Caco-2 (cell line): ENCODE measurements at regions of chr11 and their contacts with region 1.

Region 1: DNA sequence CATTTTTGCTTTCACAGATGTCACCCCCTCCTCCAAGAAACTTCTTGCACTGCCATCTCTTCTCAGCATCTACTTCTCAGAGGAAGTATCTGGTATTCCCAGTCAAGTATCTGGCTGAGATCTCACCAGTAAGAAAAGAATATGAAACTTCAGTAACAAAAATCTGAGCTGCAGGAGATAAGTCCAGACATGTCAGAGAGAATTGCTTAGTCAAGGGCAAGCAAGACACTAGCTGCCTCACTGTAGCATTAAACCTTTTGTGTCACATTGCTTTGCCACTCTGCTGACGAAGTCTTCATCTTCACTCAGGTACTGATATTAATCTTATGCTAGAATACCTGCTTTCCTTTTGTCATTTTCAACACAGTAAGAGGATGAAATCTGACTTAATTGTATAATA is 70.6 kb upstream of the ZC3H12C start:
- DNase-seq: no peak
- H3K4me3 ChIP-seq: no peak overlapping the region
- H3K4me3 Mint-ChIP-seq: no peak overlapping the region
- H3K27ac Mint-ChIP-seq: no peak overlapping the region
- H3K4me1 ChIP-seq: peaks cover 14% of the 10 kb centered on the region
- H3K4me1 Mint-ChIP-seq: no peaks in the 10 kb centered on the region
- H3K27me3 ChIP-seq: no peaks in the 10 kb centered on the region
- H3K27me3 Mint-ChIP-seq: peaks cover 16% of the 10 kb centered on the region
- CTCF ChIP-seq: no peak

Region 2: DNA sequence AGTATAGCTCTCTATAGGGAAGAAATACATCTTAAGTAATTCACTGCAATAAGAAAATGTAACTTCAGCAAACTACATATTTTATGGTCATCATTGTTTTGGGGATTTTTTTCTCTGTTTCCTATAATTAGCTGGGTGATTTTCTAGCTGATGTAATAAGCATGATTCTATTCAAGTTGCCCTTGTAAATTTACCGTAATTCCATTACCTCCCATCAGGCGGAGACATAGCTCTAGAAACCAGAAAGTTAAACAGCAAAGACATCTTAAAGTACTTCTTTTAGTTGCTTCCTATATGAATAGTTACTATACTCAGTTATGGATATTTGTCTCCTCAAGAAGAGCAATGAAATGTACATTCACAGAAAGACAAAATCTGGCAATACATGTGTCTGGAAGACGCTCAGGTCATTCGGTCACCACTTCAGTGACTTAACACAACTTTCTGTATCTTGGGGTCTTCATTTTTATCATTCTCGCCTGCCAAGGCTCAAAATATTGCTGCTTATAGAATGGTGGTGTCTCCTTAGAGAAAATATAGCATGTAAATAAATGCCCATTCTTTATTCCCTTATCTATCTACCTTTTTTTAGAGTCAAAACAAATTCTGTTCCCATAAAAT is 169.3 kb before region 1 on chr11:
- CTCF ChIA-PET with region 1: no interaction called
- POLR2A ChIA-PET with region 1: no interaction called
- intact Hi-C with region 1: no loop called
- DNase-seq: peak in 1 of 2 experiments; percentile 66
- H3K4me3 ChIP-seq: no peak overlapping the region
- H3K4me3 Mint-ChIP-seq: no peak overlapping the region
- H3K27ac Mint-ChIP-seq: no peak overlapping the region
- H3K4me1 ChIP-seq: no peaks in the 10 kb centered on the region
- H3K4me1 Mint-ChIP-seq: no peaks in the 10 kb centered on the region
- H3K27me3 ChIP-seq: peaks cover 1% of the 10 kb centered on the region; the same call in 1 of the 2 replicates
- H3K27me3 Mint-ChIP-seq: peaks cover 5% of the 10 kb centered on the region
- CTCF ChIP-seq: peak; percentile 86 to 87

Region 3: GRCh38 chr11:109972939-109973338 is 49.6 kb before region 1 on chr11:
- CTCF ChIA-PET with region 1: no interaction called
- POLR2A ChIA-PET with region 1: no interaction called
- intact Hi-C with region 1: no loop called
- DNase-seq: no peak
- H3K4me3 ChIP-seq: no peak overlapping the region
- H3K4me3 Mint-ChIP-seq: no peak overlapping the region
- H3K27ac Mint-ChIP-seq: no peak overlapping the region
- H3K4me1 ChIP-seq: no peaks in the 10 kb centered on the region
- H3K4me1 Mint-ChIP-seq: no peaks in the 10 kb centered on the region
- H3K27me3 ChIP-seq: no peaks in the 10 kb centered on the region
- H3K27me3 Mint-ChIP-seq: peaks cover 3% of the 10 kb centered on the region
- CTCF ChIP-seq: no peak

Region 4: GRCh38 chr11:109984634-109985289 is 37.8 kb before region 1 on chr11:
- CTCF ChIA-PET with region 1: no interaction called
- POLR2A ChIA-PET with region 1: no interaction called
- intact Hi-C with region 1: no loop called
- DNase-seq: no peak
- H3K4me3 ChIP-seq: no peak overlapping the region
- H3K4me3 Mint-ChIP-seq: no peak overlapping the region
- H3K27ac Mint-ChIP-seq: no peak overlapping the region
- H3K4me1 ChIP-seq: peaks cover 34% of the 10 kb centered on the region
- H3K4me1 Mint-ChIP-seq: peaks cover 20% of the 10 kb centered on the region
- H3K27me3 ChIP-seq: no peaks in the 10 kb centered on the region
- H3K27me3 Mint-ChIP-seq: no peaks in the 10 kb centered on the region
- CTCF ChIP-seq: no peak

Region 5: DNA sequence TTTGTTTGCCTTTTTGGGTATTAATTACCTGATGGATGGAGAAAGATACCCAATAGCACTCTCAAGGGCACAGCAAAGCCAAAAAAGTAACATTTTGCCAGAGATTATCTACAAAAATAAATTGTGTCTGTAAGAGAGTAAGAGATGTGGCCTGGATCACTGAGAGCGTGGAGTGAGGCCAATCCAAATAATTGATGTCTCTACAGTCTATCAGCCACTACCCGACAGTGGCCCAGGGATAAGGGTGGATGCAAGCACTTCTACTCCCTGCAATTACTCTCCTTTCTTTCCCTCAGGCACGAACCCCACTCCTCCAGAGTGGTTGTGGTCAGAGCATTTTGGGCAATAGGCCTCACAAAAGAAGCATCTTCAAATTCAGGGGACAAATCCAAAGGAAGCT is 21.7 kb before region 1 on chr11:
- CTCF ChIA-PET with region 1: no interaction called
- POLR2A ChIA-PET with region 1: interaction called, 10 read pairs
- intact Hi-C with region 1: no loop called
- DNase-seq: no peak
- H3K4me3 ChIP-seq: no peak overlapping the region
- H3K4me3 Mint-ChIP-seq: no peak overlapping the region
- H3K27ac Mint-ChIP-seq: no peak overlapping the region
- H3K4me1 ChIP-seq: peaks cover 13% of the 10 kb centered on the region
- H3K4me1 Mint-ChIP-seq: no peaks in the 10 kb centered on the region
- H3K27me3 ChIP-seq: no peaks in the 10 kb centered on the region
- H3K27me3 Mint-ChIP-seq: no peaks in the 10 kb centered on the region
- CTCF ChIP-seq: no peak

Region 6: GRCh38 chr11:110077831-110078325 is 55.3 kb after region 1 on chr11:
- CTCF ChIA-PET with region 1: no interaction called
- POLR2A ChIA-PET with region 1: no interaction called
- intact Hi-C with region 1: loop called (anchors 5 kb)
- DNase-seq: no peak
- H3K4me3 ChIP-seq: no peak overlapping the region
- H3K4me3 Mint-ChIP-seq: no peak overlapping the region
- H3K27ac Mint-ChIP-seq: no peak overlapping the region
- H3K4me1 ChIP-seq: peaks cover 33% of the 10 kb centered on the region
- H3K4me1 Mint-ChIP-seq: peaks cover 19% of the 10 kb centered on the region
- H3K27me3 ChIP-seq: no peaks in the 10 kb centered on the region
- H3K27me3 Mint-ChIP-seq: no peaks in the 10 kb centered on the region
- CTCF ChIP-seq: no peak